ENCODE measurements at regions of chr13 and their contacts with region 1.

Region 1: DNA sequence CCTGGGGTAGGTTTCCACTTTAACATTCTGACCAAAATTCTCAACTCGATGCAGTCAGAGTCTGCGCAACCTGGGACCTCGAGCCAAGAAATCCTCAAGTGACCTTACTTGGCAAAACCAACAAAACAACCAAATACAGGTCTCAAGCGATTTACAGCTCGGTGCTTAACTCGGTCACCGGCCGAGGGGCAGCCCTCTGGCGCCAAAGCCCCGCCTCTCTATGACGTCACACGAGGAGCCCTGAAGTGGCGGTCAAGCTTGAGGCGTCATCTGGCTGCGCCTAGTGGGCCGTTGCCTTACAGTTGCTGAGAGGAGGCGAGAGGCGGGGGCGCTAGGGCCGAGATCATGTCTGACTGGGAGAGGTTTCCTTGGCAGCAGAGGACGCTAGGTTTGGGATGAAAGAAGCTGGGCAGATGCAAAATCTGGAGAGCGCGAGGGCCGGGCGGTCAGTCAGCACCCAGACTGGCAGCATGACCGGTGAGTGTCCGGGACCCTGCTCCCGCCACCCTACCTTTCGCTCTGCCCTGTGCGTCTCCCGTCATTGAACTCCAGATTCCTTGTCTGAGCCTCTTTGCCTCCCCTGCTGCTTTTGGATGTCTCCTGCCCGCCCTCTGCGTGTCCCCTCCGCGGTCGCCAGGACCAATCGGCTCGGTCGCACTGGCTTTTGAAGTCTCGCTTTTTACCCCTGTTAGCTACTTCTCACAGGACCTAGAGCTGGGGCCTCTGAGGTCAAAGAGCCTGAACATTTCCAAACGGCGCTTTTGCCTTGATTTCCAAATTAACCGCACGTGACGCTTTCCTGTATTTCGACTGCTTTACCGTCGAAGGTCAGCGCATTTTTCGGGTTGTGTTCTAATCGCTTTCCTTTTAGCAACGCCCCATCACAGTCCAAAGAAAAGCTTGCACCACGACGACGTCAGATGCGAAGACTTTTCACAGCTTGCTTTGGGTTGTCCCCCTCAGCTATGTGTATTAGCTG is at the start of gene CDADC1:
- DNase-seq: peak; percentile 77 to 87 (median 81)
- H3K4me3 ChIP-seq: peak within 1 kb of the TSS; percentile 86 to 89
- H3K4me3 Mint-ChIP-seq: peak within 1 kb of the TSS; percentile 94 to 99 (median 97)
- H3K27ac ChIP-seq: peak within 1 kb of the TSS; percentile 89
- H3K27ac Mint-ChIP-seq: peak within 1 kb of the TSS; percentile 95 to 99 (median 97)
- H3K4me1 ChIP-seq: peaks cover 48% of the 10 kb centered on the region
- H3K4me1 Mint-ChIP-seq: peaks cover 24 to 51% (median 38%) of the 10 kb centered on the region in 4 donors
- H3K27me3 ChIP-seq: no peaks in the 10 kb centered on the region
- H3K27me3 Mint-ChIP-seq: peaks cover 0 to 4% of the 10 kb centered on the region in 2 donors
- total RNA-seq, gene CDADC1: 14.7 to 15.9 TPM

Region 2: DNA sequence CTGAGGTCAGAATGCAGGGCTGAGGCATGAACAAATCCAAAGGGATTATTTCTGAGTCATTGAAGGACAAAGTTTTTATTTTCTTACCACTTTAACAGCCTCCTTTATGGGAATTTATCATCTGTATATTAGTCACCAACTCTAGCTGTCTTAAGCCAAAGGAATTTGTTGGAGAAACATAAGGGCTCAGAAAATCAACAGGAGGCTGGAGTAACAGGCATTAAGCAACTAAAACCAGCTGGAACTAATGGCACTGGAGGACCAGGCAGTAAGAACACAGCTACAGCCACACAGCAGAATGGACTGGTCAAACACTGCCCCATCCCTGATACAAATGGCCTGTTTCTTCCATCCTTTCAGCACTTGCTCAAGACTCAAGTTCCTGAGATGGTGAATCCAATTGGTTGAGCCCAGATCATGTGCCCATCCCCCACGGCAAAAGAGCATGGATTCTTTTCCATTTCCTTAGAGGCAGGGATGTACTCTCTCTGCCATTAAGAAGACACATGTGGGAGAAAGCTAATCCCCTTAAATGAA is 429.4 kb before region 1 on chr13:
- CTCF ChIA-PET with region 1: no interaction called
- POLR2A ChIA-PET with region 1: no interaction called
- intact Hi-C with region 1: no loop called
- DNase-seq: no peak
- H3K4me3 ChIP-seq: no peak overlapping the region
- H3K4me3 Mint-ChIP-seq: peak overlapping the region in 1 of 8 donors; percentile 31
- H3K27ac ChIP-seq: no peak overlapping the region
- H3K27ac Mint-ChIP-seq: no peak overlapping the region
- H3K4me1 ChIP-seq: peaks cover 15% of the 10 kb centered on the region
- H3K4me1 Mint-ChIP-seq: peaks cover 9 to 26% (median 16%) of the 10 kb centered on the region in 4 donors
- H3K27me3 ChIP-seq: no peaks in the 10 kb centered on the region
- H3K27me3 Mint-ChIP-seq: peaks cover 0 to 2% of the 10 kb centered on the region in 2 donors

Region 3: GRCh38 chr13:49265822-49266221 is 17.9 kb after region 1 on chr13:
- CTCF ChIA-PET with region 1: interaction called, 12 read pairs
- POLR2A ChIA-PET with region 1: no interaction called
- intact Hi-C with region 1: no loop called
- DNase-seq: no peak
- H3K4me3 ChIP-seq: no peak overlapping the region
- H3K4me3 Mint-ChIP-seq: no peak overlapping the region
- H3K27ac ChIP-seq: no peak overlapping the region
- H3K27ac Mint-ChIP-seq: peak overlapping the region in 1 of 7 donors; percentile 28
- H3K4me1 ChIP-seq: no peaks in the 10 kb centered on the region
- H3K4me1 Mint-ChIP-seq: peaks cover 0 to 2% (median under 1%) of the 10 kb centered on the region in 4 donors
- H3K27me3 ChIP-seq: no peaks in the 10 kb centered on the region
- H3K27me3 Mint-ChIP-seq: no peaks in the 10 kb centered on the region